Heart right ventricle (tissue), 16 donors: ENCODE measurements at regions of chr3 and their contacts with region 1.

Region 1: GRCh38 chr3:186152889-186153292 is 44.0 kb upstream of the ETV5 start:
- DNase-seq: no peak
- ATAC-seq: peak in 6 of 8 donors; percentile 38 to 66 (median 50)
- H3K4me3 ChIP-seq: no peak overlapping the region
- H3K27ac ChIP-seq: peak overlapping the region in 1 of 10 donors; percentile 64
- H3K4me1 ChIP-seq: peaks cover 0 to 38% (median 0%) of the 10 kb centered on the region in 9 donors
- H3K27me3 ChIP-seq: peaks cover 0 to 4% (median 0%) of the 10 kb centered on the region in 7 donors
- CTCF ChIP-seq: no peak

Region 2: GRCh38 chr3:186108941-186109865 is 43.7 kb before region 1 on chr3 and contains the start of gene ETV5:
- intact Hi-C with region 1: no loop called
- DNase-seq: peak; percentile 98 to 99
- ATAC-seq: peak; percentile 95 to 99 (median 98)
- H3K4me3 ChIP-seq: peak within 1 kb of the TSS; percentile 67 to 95 (median 84)
- H3K27ac ChIP-seq: peak within 1 kb of the TSS; percentile 60 to 90 (median 84)
- H3K4me1 ChIP-seq: peaks cover 5 to 34% (median 23%) of the 10 kb centered on the region in 9 donors
- H3K27me3 ChIP-seq: peaks cover 0 to 69% (median 0%) of the 10 kb centered on the region in 7 donors
- CTCF ChIP-seq: no peak
- total RNA-seq, gene ETV5: 4.4 to 12.6 (median 5.8) TPM

Region 3: DNA sequence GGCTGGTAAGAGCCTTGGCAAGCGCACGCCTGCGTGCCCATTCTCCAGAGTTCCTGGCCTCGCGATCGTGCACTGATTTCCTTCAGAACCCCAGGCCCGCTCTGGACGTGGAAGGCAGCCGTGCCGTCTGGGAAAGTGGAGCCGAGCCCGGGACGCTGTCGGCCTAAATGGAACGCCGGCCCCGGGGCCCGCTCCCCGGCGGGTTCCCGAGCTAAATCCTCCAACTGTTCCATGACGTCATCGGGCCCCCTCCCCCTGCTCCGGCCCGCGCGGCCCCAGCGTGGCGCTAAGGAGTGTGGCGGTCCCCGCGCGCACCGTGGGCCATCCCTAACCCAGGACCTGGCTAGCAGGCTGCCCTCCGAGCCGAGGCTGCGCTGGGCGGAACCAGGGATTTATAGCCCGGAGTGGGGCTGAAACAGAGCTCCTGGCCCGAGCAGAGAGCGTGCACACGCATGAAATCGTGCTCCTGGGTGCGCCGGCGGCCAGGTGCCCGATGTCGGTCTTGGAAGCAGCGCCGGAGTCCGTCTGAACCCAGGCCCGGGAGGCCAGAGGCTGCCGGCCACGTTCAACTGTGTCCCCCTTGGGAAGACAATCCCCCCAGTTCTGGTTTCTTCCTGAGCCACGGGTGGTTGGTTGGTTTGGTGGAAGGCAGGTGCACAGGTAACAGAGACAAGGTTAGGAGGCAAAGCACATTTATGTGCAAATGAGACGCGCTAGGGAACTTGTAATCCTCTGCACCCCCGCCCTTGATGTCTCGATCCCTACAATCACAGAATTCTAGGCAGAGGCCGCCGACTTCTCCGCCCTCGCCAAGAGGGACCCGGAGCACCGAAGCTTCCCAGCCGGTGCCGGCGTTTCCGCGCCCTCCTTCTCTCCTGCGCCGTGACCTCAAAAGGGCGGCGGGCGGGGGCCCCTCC is 40.9 kb after region 1 on chr3:
- intact Hi-C with region 1: loop called in 1 of 10 experiments (anchors 1 kb)
- DNase-seq: peak in 1 of 2 donors; percentile 16
- ATAC-seq: peak in 7 of 8 donors; percentile 48 to 78 (median 73)
- H3K4me3 ChIP-seq: peak overlapping the region in 8 of 10 donors; percentile 20 to 39 (median 25)
- H3K27ac ChIP-seq: peak overlapping the region in 2 of 10 donors; percentile 9 to 37
- H3K4me1 ChIP-seq: peaks cover 0 to 16% (median 8%) of the 10 kb centered on the region in 9 donors
- H3K27me3 ChIP-seq: peaks cover 0 to 36% (median 24%) of the 10 kb centered on the region in 7 donors
- CTCF ChIP-seq: no peak